Mammary epithelial cell (primary cell): ENCODE measurements at regions of chr1 and their contacts with region 1.

Region 1: GRCh38 chr1:21368515-21369289 is 71.2 kb upstream of the NBPF3 start:
- DNase-seq: peak; percentile 59
- H3K4me3 ChIP-seq: no peak overlapping the region
- H3K27ac ChIP-seq: no peak overlapping the region
- H3K4me1 ChIP-seq: peaks cover 4% of the 10 kb centered on the region
- H3K27me3 ChIP-seq: no peaks in the 10 kb centered on the region
- CTCF ChIP-seq: peak; percentile 96 to 100

Region 2: DNA sequence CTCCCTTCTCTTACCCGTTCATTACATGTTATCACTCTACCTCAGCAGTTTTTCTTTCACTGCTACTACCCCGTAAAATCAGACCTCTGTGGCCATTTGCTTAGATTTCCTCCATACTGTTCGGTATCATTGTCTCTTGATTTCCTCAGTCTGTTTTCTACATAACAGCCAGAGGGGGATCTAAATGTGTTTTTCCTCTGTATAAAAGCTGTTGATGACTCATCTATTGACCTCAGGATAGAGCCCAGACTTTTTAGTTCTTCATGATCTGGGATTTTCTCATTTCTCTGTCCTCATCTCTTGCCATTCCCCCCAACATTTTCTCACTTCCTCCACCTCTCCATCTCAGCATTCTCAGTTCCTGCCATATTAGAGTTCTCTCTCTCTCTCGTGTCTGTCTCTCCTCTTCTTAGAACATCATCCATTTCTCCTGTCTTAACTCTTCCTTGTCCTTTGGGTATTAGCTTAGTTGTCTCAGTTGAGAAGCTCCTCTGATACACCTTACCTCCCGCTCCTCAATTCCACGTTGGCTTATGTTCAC is 1476.0 kb before region 1 on chr1:
- CTCF ChIA-PET with region 1: no interaction called
- dilution Hi-C with region 1: no loop called
- in situ Hi-C with region 1: no loop called
- intact Hi-C with region 1: no loop called
- DNase-seq: no peak
- H3K4me3 ChIP-seq: no peak overlapping the region
- H3K27ac ChIP-seq: no peak overlapping the region
- H3K4me1 ChIP-seq: peaks cover 19% of the 10 kb centered on the region
- H3K27me3 ChIP-seq: no peaks in the 10 kb centered on the region
- CTCF ChIP-seq: no peak

Region 3: GRCh38 chr1:20696397-20697329 is 672.0 kb before region 1 on chr1:
- CTCF ChIA-PET with region 1: no interaction called
- dilution Hi-C with region 1: no loop called
- in situ Hi-C with region 1: no loop called
- intact Hi-C with region 1: loop called (anchors 2 kb)
- DNase-seq: peak; percentile 86
- H3K4me3 ChIP-seq: peak overlapping the region; percentile 49 to 75 (median 49)
- H3K27ac ChIP-seq: peak overlapping the region; percentile 20
- H3K4me1 ChIP-seq: peaks cover 22% of the 10 kb centered on the region
- H3K27me3 ChIP-seq: no peaks in the 10 kb centered on the region
- CTCF ChIP-seq: peak; percentile 56 to 93

Region 4: DNA sequence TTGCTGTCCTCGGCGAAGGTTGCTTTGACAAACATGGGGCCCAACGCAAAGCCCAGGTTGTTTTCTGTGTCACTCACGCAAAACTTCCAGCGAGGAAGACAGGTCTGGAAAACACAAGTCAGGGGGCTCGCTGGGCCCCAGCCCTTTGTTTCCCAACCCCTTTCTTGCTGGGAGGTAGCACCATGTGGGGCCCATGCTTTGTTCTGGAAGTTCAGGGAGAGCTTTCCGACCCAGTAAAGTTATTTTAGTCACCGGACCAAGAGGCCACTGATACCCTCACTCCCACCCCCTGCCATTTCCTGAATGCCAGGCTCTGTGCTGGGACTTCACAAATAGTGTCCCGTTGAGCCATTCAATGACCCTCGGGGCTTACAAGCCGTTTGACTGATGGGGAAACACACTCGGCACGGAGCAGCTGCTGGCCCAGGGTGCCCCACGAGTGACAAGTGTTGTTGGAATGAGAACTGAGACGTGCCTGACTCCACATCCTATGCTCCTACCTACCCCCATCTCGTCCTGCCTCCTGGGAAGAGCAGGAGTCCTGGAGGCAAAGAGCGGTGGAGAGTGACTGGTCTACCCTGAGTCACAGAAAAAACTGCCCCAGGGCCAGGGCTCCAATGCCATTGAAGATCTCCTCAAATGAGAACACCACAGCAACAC is 130.4 kb before region 1 on chr1:
- CTCF ChIA-PET with region 1: no interaction called
- dilution Hi-C with region 1: loop called (anchors 5 kb)
- in situ Hi-C with region 1: no loop called
- intact Hi-C with region 1: no loop called
- DNase-seq: peak; percentile 82
- H3K4me3 ChIP-seq: no peak overlapping the region
- H3K27ac ChIP-seq: no peak overlapping the region
- H3K4me1 ChIP-seq: peaks cover 18% of the 10 kb centered on the region
- H3K27me3 ChIP-seq: no peaks in the 10 kb centered on the region
- CTCF ChIP-seq: no peak

Region 5: GRCh38 chr1:21334214-21335087 is 34.3 kb before region 1 on chr1:
- CTCF ChIA-PET with region 1: no interaction called
- dilution Hi-C with region 1: no loop called
- in situ Hi-C with region 1: no loop called
- intact Hi-C with region 1: loop called (anchors 1 kb)
- DNase-seq: peak; percentile 90
- H3K4me3 ChIP-seq: peak overlapping the region; percentile 25 to 46 (median 36)
- H3K27ac ChIP-seq: peak overlapping the region; percentile 48
- H3K4me1 ChIP-seq: peaks cover 33% of the 10 kb centered on the region
- H3K27me3 ChIP-seq: no peaks in the 10 kb centered on the region
- CTCF ChIP-seq: peak; percentile 91 to 92

Region 6: DNA sequence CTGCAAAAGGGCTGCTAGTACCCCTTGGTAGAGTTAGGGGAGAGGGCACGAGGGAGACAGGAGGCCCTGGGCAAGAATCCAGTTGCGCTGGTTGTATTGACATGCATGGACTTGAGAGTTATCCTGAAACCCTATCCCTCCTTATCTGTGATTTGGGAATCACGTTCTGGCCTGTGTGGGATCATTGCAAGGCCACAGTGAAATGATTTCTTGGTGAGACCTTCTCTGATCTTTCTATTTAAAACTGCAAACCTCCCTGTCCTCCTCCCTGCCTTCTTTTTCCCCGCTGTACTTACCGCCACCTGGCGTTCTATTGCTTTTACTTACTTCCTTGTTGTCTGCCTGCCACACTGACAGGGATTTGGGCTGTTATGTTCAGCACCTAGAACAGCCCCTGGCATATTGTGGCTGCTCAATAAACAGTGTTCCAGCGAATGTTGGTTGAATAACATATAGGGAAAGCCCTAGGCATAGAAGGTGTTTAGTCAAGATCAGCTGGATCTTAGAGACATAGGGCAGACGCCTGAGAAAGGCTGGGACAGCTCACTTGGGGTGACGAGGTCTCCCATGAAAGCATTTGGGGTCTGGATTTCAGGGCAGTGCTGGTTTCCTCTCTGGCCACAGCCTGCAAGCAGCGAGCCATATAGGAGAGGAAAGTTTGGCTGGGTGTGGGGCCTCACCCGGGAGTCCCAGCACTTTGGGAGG is 166.1 kb after region 1 on chr1:
- CTCF ChIA-PET with region 1: no interaction called
- dilution Hi-C with region 1: no loop called
- in situ Hi-C with region 1: no loop called
- intact Hi-C with region 1: loop called (anchors 1 kb)
- DNase-seq: peak; percentile 62
- H3K4me3 ChIP-seq: no peak overlapping the region
- H3K27ac ChIP-seq: no peak overlapping the region
- H3K4me1 ChIP-seq: no peaks in the 10 kb centered on the region
- H3K27me3 ChIP-seq: peaks cover 2% of the 10 kb centered on the region
- CTCF ChIP-seq: peak in 1 of 2 donors; percentile 31

Region 7: DNA sequence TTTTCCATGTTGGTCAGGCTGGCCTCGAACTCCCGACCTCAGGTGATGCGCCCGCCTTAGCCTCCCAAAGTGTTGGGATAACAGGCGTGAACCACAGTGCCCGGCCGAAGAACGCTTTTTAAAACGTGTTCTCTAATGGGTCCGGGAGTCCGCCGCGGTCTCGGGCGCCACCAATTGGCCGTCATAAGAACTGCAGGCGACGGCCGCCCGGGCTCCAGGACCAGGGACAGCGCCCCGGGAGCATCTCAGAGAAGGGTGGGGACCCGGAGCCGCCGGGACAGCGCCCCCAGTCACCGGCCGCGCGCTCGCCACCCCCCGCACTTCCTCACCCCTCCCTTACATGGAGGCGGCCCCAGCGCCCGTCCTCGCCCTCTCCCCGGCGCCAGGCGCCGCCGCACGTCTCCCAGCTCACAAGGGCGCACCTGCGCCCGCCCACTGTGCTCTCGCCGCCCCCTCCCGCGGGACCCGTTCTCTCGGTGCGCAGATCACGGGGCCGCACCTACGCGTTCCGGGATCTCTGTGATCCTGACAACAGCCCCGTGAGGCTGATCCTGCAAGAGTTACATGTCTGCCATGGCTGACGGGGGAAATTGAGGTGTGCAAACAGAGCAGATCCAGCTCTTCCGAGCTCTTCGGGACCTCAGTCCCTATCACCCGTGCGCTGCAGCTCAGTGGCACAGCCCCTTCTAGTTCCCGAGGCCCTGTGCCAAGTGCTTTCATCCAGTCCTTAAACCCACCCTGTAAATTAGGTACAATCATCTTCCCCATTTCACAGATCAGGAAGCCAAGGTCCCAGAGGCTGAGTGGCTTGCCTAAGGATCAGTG is 290.6 kb after region 1 on chr1:
- CTCF ChIA-PET with region 1: no interaction called
- dilution Hi-C with region 1: no loop called
- in situ Hi-C with region 1: no loop called
- intact Hi-C with region 1: loop called (anchors 1 kb)
- DNase-seq: peak; percentile 62
- H3K4me3 ChIP-seq: no peak overlapping the region
- H3K27ac ChIP-seq: no peak overlapping the region
- H3K4me1 ChIP-seq: peaks cover 5% of the 10 kb centered on the region
- H3K27me3 ChIP-seq: no peaks in the 10 kb centered on the region
- CTCF ChIP-seq: peak; percentile 76 to 89